Activated CD8-positive, alpha-beta T cell treated with anti-CD3 and anti-CD28 coated beads for 36 hours (primary cell): ENCODE measurements at regions of chr22 and their contacts with region 1.

Region 1: GRCh38 chr22:42079319-42080251 is at the start of gene SMDT1:
- DNase-seq: peak; percentile 98
- ATAC-seq: peak; percentile 92
- H3K4me3 Mint-ChIP-seq: peak within 1 kb of the TSS; percentile 94
- H3K27ac Mint-ChIP-seq: peak within 1 kb of the TSS; percentile 95
- H3K4me1 Mint-ChIP-seq: peaks cover 23% of the 10 kb centered on the region
- H3K27me3 Mint-ChIP-seq: no peaks in the 10 kb centered on the region
- CTCF ChIP-seq: no peak
- total RNA-seq, gene SMDT1: 51.7 to 61.2 TPM

Region 2: GRCh38 chr22:41946629-41947423 is 132.8 kb before region 1 on chr22 and contains the start of gene CENPM:
- CTCF ChIA-PET with region 1: no interaction called
- POLR2A ChIA-PET with region 1: interaction called, 3 read pairs
- intact Hi-C with region 1: loop called (anchors 10 kb)
- DNase-seq: peak; percentile 98
- ATAC-seq: peak; percentile 97
- H3K4me3 Mint-ChIP-seq: peak within 1 kb of the TSS; percentile 88
- H3K27ac Mint-ChIP-seq: peak within 1 kb of the TSS; percentile 94
- H3K4me1 Mint-ChIP-seq: peaks cover 41% of the 10 kb centered on the region
- H3K27me3 Mint-ChIP-seq: no peaks in the 10 kb centered on the region
- CTCF ChIP-seq: peak; percentile 10
- total RNA-seq, gene CENPM: 62.5 to 63.1 TPM

Region 3: GRCh38 chr22:41983513-41984405 is 95.8 kb before region 1 on chr22:
- CTCF ChIA-PET with region 1: no interaction called
- POLR2A ChIA-PET with region 1: no interaction called
- intact Hi-C with region 1: no loop called
- DNase-seq: no peak
- ATAC-seq: no peak
- H3K4me3 Mint-ChIP-seq: no peak overlapping the region
- H3K27ac Mint-ChIP-seq: no peak overlapping the region
- H3K4me1 Mint-ChIP-seq: no peaks in the 10 kb centered on the region
- H3K27me3 Mint-ChIP-seq: peaks cover 7% of the 10 kb centered on the region
- CTCF ChIP-seq: no peak

Region 4: DNA sequence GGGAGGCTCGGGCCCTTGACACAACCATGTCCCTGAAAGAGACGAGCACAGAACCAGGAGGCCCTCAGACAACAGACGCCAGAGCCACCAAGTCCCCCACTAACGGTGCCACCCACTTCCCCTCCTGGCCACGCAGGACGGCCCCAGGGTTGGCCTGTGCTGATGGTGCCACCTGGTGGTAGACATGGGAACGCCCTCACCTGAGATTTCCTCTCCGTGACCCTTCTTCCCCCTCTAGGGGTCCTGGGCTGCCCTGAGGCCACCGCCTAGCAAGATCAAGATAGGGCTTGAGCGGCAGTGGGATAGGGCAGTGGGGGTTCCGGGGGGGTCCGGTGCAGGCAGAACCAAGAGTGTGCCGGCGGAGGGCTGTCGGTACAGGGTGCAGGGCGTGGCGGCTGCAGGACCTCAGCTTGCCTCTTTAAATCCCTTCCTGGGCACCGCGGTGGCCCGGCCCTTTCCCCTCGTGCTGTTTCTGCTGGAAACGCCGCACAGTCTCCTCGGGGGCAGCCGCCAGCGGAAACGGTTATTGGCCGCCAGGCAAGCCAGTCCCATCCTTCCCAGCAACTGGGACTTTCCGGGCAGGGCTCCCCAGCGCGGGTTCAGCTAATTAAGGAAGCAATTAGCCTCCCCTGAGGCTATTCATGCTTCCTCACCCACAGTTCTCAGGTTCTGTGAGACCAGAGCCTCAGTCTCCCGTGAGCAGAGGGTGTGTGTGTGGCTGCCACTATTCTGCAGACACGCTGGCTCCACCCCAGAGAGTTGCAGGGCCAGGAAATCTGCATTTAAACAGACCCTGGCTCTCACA is 358.1 kb after region 1 on chr22:
- CTCF ChIA-PET with region 1: no interaction called
- POLR2A ChIA-PET with region 1: no interaction called
- intact Hi-C with region 1: loop called (anchors 10 kb)
- DNase-seq: peak; percentile 84
- ATAC-seq: peak; percentile 96
- H3K4me3 Mint-ChIP-seq: peak overlapping the region; percentile 68
- H3K27ac Mint-ChIP-seq: no peak overlapping the region
- H3K4me1 Mint-ChIP-seq: peaks cover 17% of the 10 kb centered on the region
- H3K27me3 Mint-ChIP-seq: peaks cover 1% of the 10 kb centered on the region
- CTCF ChIP-seq: peak; percentile 94